ENCODE measurements at regions of chr2 and their contacts with region 1.

Region 1: GRCh38 chr2:9251154-9252001 is 44.8 kb downstream of the ASAP2 start:
- DNase-seq: no peak
- H3K4me3 ChIP-seq: no peak overlapping the region
- H3K27ac ChIP-seq: peak overlapping the region; percentile 89 to 100
- H3K4me1 ChIP-seq: peaks cover 73 to 75% of the 10 kb centered on the region in 2 experiments
- H3K27me3 ChIP-seq: no peaks in the 10 kb centered on the region
- CTCF ChIP-seq: no peak
- EP300 ChIP-seq: peak; percentile 68 to 76; a peak in 3 of 4 replicates
- RAD21 ChIP-seq: no peak

Region 2: DNA sequence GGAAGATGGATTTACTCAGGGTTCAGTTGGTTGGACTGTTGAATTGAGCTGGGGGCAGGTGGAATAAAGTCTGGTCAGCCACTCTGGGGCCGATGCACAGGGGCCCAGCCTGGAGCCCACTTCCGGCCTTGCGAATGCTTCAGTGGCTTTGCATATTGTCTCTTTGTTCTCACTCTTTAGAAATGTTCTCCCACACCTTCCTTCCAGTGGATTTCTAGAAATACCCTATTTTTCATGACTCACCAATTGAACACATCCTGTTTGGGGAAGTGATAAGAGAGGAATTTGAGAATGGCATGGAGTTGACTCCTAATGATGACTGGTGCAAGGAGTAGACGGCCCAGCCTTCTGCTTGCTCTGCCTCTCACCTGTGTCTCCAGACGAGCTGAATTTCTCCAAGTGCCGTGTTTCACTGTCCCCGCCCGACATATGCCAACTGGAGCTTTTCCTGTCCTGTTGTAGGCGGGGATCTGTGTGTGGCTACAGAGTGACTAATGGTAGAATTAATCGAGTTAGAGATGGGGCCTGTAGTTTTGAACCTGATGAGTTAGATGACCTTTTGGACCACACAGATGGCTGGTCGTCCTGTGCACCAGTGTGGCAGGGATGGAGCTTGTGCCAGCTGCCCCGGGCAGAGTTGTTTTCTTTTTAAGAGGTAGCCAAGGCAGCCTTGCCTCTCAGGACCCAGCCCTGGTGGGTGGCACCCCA is 16.5 kb before region 1 on chr2:
- CTCF ChIA-PET with region 1: interaction called, 13 read pairs
- POLR2A ChIA-PET with region 1: interaction called, 20 read pairs
- DNase-seq: peak; percentile 87
- H3K4me3 ChIP-seq: peak overlapping the region; percentile 29 to 44; a peak in 3 of 4 replicates
- H3K27ac ChIP-seq: peak overlapping the region; percentile 99 to 100
- H3K4me1 ChIP-seq: peaks cover 90 to 99% of the 10 kb centered on the region in 2 experiments
- H3K27me3 ChIP-seq: no peaks in the 10 kb centered on the region
- CTCF ChIP-seq: no peak
- EP300 ChIP-seq: peak; percentile 96 to 97
- RAD21 ChIP-seq: peak; percentile 10; the same call in 1 of the 2 replicates

Region 3: GRCh38 chr2:9262671-9263171 is 11.3 kb after region 1 on chr2:
- CTCF ChIA-PET with region 1: interaction called, 13 read pairs
- POLR2A ChIA-PET with region 1: interaction called, 3 read pairs
- DNase-seq: peak; percentile 83
- H3K4me3 ChIP-seq: no peak overlapping the region
- H3K27ac ChIP-seq: peak overlapping the region; percentile 66 to 88
- H3K4me1 ChIP-seq: peaks cover 52 to 69% of the 10 kb centered on the region in 2 experiments
- H3K27me3 ChIP-seq: no peaks in the 10 kb centered on the region
- CTCF ChIP-seq: no peak
- EP300 ChIP-seq: peak in 1 of 2 experiments; percentile 8; a peak in 1 of 4 replicates
- RAD21 ChIP-seq: no peak

Measured in SK-N-SH (cell line).